ENCODE measurements at regions of chr10 and their contacts with region 1.

Region 1: DNA sequence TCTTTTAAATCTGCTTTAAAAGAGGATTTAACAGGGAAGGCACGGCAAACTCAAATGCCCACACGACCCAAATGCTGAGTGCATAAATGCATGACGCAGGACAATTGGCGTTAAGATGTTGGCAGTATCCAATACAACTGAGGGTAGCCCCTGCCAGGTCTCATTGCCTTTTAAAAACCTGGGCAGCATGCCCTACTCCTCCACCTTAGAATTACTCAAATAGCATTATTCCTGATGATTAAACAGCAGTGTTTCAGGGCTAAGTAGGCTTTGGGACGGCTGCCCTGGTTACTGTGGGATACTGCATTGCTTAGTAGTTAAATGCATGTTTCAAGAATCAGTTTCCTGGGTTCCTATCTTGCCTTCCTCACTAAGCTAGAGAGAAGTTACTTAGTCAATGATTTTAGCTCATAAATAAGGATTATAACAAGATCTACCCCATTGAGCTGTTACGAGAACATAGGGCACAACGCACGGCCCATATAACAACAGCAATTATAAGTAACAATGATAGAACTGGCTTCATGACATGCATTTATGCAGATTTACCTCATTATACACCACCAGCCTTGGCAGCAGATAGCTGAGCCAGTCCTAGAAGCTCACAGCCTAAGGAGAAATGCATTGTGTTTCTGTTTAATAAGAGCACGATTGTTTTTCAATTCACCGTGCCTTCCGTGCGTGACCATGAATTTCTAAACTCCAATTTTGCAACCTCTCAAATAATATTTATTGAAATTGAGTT is 7.9 kb downstream of the TUBAL3 start:
- DNase-seq: no peak
- ATAC-seq: no peak
- H3K4me3 ChIP-seq: no peak overlapping the region
- H3K27ac ChIP-seq: no peak overlapping the region
- H3K4me1 ChIP-seq: peaks cover 8% of the 10 kb centered on the region; the same call in 1 of the 2 replicates
- H3K27me3 ChIP-seq: peaks cover 5 to 7% of the 10 kb centered on the region in 2 experiments; a peak in 3 of 5 replicates
- CTCF ChIP-seq: no peak
- EP300 ChIP-seq: no peak
- POLR2A ChIP-seq: no peak
- RAD21 ChIP-seq: no peak

Region 2: DNA sequence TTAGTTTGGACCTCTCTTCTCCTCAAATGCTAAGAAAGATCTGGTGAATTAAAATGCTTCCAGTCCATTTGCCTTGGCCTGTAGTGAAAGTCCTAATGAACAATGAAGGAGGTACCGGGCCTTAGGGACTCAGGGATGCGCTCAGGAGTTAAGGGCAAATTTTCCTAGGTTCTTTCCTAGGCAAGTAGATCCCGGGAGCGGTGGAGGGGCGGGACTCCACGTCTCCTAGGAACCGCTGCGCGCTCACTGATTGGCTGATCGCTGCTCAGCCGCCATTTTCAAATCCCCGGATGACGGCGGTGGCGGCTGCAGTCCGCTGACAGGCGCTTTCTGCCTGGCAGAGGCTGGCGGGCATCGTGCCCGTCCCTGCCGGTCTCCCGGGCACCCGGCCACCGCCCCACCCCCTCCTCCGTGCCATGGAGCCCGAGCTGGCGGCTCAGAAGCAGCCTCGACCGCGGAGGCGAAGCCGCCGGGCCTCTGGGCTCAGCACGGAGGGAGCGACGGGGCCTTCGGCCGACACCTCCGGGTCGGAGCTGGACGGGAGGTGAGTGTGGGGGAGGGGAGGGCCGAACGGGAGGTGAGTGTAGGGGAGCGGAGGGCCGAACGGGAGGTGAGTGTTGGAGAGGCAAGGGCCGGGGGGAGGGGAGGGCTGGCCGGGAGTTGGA is 15.7 kb after region 1 on chr10 and contains the start of gene NET1:
- CTCF ChIA-PET with region 1: no interaction called
- POLR2A ChIA-PET with region 1: no interaction called
- in situ Hi-C with region 1: no loop called
- intact Hi-C with region 1: no loop called
- DNase-seq: peak; percentile 80
- ATAC-seq: peak; percentile 98
- H3K4me3 ChIP-seq: peak within 1 kb of the TSS; percentile 83 to 92 (median 83)
- H3K27ac ChIP-seq: peak within 1 kb of the TSS; percentile 75
- H3K4me1 ChIP-seq: peaks cover 30% of the 10 kb centered on the region
- H3K27me3 ChIP-seq: peaks cover 0 to 10% of the 10 kb centered on the region in 2 experiments; a peak in 1 of 5 replicates
- CTCF ChIP-seq: no peak
- EP300 ChIP-seq: no peak
- POLR2A ChIP-seq: peak; percentile 32 to 55; a peak in 2 of 4 replicates
- RAD21 ChIP-seq: no peak
- total RNA-seq, gene NET1: 65.8 and 115 TPM in 2 replicates

Region 3: DNA sequence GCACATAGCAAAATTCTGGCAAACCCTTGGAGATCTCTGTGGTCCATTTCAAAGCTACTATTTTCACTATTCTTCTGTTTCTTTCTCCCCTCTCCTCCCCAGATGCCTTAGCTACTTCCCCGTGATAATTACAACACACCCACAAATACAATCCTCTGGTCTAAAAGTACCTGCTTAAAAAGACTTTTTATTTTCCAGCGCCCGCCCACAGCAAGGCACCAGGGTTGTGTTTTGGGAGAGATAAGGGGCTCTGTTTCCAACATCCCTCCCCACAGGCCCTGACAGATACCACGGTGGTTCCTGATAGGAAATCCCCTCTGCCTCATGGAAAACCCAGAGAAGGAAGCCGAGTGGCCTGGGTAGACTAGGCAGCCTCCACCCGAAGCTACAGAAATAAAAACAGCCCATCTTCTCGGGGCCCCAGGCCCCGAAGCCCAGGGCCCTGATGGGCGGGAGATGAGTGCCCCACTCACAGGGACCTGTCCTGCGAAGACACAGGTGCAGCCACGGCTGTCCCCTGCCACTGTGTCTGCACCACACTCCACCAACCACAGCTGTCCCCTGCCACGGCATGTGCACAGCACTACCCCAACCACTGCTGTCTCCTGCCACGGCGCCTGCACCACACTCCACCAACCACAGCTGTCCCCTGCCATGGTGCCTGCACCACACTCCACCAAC is 82.9 kb after region 1 on chr10:
- CTCF ChIA-PET with region 1: no interaction called
- POLR2A ChIA-PET with region 1: no interaction called
- in situ Hi-C with region 1: no loop called
- intact Hi-C with region 1: loop called (anchors 2 kb)
- DNase-seq: no peak
- ATAC-seq: no peak
- H3K4me3 ChIP-seq: no peak overlapping the region
- H3K27ac ChIP-seq: no peak overlapping the region
- H3K4me1 ChIP-seq: peaks cover 49% of the 10 kb centered on the region
- H3K27me3 ChIP-seq: peaks cover 3 to 26% of the 10 kb centered on the region in 2 experiments; a peak in 3 of 5 replicates
- CTCF ChIP-seq: no peak
- EP300 ChIP-seq: no peak
- POLR2A ChIP-seq: no peak
- RAD21 ChIP-seq: no peak

Region 4: GRCh38 chr10:5764422-5765297 is 367.9 kb after region 1 on chr10:
- CTCF ChIA-PET with region 1: no interaction called
- POLR2A ChIA-PET with region 1: no interaction called
- in situ Hi-C with region 1: no loop called
- intact Hi-C with region 1: no loop called
- DNase-seq: no peak
- ATAC-seq: no peak
- H3K4me3 ChIP-seq: no peak overlapping the region
- H3K27ac ChIP-seq: no peak overlapping the region
- H3K4me1 ChIP-seq: peaks cover 14% of the 10 kb centered on the region
- H3K27me3 ChIP-seq: no peaks in the 10 kb centered on the region
- CTCF ChIP-seq: peak; percentile 30; the same call in 1 of the 2 replicates
- EP300 ChIP-seq: no peak
- POLR2A ChIP-seq: 0 out of 4 replicates have a peak, but pooled peaks of 1 of the 2 experiments have one; percentile 31
- RAD21 ChIP-seq: no peak

Measured in HepG2 (cell line).